ENCODE measurements at regions of chr2 and their contacts with region 1.

Region 1: DNA sequence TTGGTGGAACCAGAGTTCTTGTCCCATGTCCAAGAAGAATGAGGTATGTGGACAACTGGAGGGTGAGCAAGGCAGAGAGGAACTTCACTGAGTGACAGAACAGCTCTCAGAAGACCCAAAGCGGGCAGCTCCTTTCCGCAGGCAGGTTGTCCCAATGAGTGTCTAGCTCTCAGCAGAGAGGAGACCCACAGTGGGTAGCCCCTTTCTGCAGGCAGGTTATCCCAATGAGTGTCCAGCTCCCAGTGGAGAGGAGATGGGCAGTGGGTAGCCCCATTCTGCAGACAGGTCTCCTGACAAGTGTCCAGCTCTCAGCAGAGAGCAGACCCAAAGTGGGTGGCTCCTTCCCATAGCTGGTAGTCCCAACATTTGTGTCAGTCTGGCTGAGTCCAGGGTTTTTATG is 69.6 kb downstream of the SRBD1 start:
- DNase-seq: no peak
- H3K4me3 ChIP-seq: no peak overlapping the region
- H3K27ac ChIP-seq: no peak overlapping the region
- H3K4me1 ChIP-seq: no peaks in the 10 kb centered on the region
- H3K27me3 ChIP-seq: no peaks in the 10 kb centered on the region
- CTCF ChIP-seq: no peak
- POLR2A ChIP-seq: no peak

Region 2: GRCh38 chr2:44083054-44083453 is 1458.4 kb before region 1 on chr2:
- intact Hi-C with region 1: loop called (anchors 5 kb)
- DNase-seq: no peak
- H3K4me3 ChIP-seq: no peak overlapping the region
- H3K27ac ChIP-seq: no peak overlapping the region
- H3K4me1 ChIP-seq: no peaks in the 10 kb centered on the region
- H3K27me3 ChIP-seq: no peaks in the 10 kb centered on the region
- CTCF ChIP-seq: no peak
- POLR2A ChIP-seq: no peak